Astrocyte of the cerebellum (primary cell): ENCODE measurements at regions of chr4 and their contacts with region 1.

Region 1: DNA sequence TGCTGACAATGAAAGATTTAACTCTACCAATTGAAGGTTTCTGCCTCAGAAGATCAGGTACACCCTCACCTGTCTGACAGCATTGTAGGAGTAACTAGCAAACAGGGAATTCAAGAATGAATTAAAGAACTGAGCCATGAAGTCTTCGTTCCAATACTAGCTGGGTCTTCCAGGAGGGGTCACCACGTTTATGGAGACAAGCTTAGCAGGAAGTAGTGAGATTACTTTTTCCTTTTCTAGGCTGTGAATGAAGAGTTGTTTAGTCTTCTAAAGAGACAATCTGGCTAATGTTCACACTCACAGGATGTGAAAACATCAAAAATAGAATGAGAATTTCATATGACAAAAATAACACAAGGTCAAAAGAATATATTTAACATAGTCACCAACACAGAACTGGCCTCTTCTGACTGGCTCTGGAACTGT is 54.9 kb downstream of the REELD1 start:
- DNase-seq: no peak
- H3K4me3 ChIP-seq: no peak overlapping the region
- CTCF ChIP-seq: no peak

Region 2: DNA sequence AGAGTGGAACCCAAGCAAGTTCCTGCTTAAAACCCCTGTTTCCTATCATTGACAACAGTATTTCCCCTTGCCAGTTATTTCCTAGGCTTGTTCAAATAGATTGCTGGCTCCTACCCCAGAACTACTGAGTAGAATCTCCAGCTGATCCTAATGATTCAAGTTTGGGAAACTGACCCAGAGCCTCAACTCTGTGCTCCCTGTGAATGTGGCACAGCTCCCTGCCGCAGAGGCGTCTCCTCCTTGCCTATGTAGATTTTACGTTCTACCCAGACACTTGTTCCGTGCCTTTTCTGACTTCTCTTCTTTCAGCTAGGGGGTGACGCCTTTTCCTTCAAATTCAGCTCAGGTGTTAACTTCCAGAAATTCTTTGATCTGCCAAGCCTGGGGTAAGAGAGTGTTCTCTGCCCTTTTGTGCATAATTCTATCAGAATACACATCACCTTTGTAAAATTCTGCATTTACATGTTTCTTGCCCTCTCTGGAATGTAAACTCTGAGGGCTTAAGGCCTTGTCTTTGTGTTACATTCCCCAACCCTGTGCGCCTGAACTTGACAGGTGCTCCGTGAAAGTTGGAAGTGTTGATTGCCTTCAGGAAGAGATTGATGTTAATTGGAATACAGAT is 89.3 kb before region 1 on chr4:
- in situ Hi-C with region 1: no loop called
- DNase-seq: no peak
- H3K4me3 ChIP-seq: no peak overlapping the region
- CTCF ChIP-seq: no peak

Region 3: DNA sequence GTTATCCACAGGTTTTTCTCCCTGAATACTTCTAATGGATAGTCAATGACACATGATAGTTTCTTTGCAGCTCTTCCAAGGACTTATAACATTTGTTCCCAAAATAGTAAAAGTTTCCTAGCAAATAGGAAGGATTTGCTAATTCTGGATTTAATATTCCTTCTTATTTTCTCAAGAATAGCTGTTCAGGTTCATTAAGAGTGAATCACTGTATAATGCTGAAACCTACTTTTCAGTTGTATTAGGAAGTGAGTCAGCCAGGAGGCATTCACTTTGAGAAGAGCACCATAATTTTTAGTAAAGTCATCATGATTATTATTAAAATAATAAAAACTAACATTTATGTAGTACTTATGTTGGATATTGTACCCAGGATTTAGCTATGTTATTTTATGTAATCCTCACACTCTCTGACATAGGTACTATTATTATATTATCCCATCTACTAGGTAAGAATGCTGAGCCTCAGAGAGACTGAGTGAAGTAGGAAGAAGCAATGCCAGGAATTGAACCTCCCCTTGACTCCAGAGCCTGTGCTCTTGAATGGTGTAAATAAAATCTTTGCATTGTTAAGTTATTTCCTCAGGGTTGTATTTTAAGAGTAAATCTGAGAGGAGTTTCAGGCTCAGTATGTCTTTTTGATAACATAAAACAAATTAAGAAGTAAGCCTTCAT is 59.9 kb after region 1 on chr4:
- in situ Hi-C with region 1: loop called (anchors 5 kb)
- DNase-seq: peak; percentile 11
- H3K4me3 ChIP-seq: no peak overlapping the region
- CTCF ChIP-seq: no peak

Region 4: GRCh38 chr4:146381263-146381872 is 112.1 kb after region 1 on chr4:
- in situ Hi-C with region 1: no loop called
- DNase-seq: no peak
- H3K4me3 ChIP-seq: no peak overlapping the region
- CTCF ChIP-seq: no peak